Caco-2 (cell line): ENCODE measurements at regions of chr1 and their contacts with region 1.

Region 1: DNA sequence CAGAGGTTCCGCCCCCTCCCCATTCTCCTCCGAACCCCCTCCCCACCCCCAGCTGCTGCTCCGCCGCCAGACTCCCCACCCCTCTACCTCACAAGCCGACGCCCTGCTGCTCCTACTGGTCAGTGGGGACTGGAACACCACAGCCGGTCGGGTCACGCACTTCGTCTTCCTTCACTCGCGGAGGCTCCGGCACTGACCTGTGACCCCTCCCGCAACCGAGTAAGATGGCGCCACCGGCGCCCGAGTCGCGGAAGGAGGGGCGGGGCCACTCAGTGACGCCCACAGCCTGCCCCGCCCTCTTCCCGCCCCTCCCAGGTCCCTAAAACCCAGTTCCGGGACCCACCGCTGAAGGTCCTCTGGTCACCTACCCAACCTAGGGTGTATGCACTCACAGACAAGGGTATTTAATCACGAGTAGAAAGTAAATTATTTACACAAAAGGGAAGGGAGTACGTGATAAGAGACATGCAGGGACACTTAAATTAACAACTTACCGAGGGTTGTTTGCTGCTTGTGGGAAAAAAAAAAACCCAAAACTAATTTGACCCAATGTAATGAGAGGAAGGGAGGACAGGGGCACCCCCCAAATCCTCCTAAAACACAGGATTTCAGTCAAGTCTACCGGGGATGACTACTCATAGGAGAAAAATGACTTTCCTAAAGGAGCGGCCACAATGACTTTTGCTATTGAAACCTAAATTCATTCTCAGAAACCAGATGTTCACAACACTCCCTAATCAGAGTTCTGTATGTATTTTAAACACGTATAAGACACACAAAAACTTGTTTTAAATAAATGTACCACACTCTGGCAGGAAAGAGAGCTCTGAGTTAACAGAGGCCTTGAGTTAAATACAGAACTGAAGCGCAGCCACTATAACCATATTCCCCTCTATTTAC is at the start of gene RIT1:
- DNase-seq: peak; percentile 92 to 93
- H3K4me3 ChIP-seq: peak within 1 kb of the TSS; percentile 57
- H3K4me3 Mint-ChIP-seq: peak within 1 kb of the TSS; percentile 89
- H3K27ac Mint-ChIP-seq: peak within 1 kb of the TSS; percentile 84
- H3K4me1 ChIP-seq: 0 out of 2 replicates have a peak, but pooled peaks cover 7% of the 10 kb centered on the region
- H3K4me1 Mint-ChIP-seq: peaks cover 15% of the 10 kb centered on the region
- H3K27me3 ChIP-seq: no peaks in the 10 kb centered on the region
- H3K27me3 Mint-ChIP-seq: no peaks in the 10 kb centered on the region
- CTCF ChIP-seq: peak in 1 of 2 experiments; percentile 17
- total RNA-seq, gene RIT1: 21.9 and 23.0 TPM in 2 replicates

Region 2: GRCh38 chr1:155636397-155637153 is 274.8 kb before region 1 on chr1:
- CTCF ChIA-PET with region 1: no interaction called
- POLR2A ChIA-PET with region 1: no interaction called
- intact Hi-C with region 1: no loop called
- DNase-seq: no peak
- H3K4me3 ChIP-seq: no peak overlapping the region
- H3K4me3 Mint-ChIP-seq: no peak overlapping the region
- H3K27ac Mint-ChIP-seq: no peak overlapping the region
- H3K4me1 ChIP-seq: peaks cover under 1% of the 10 kb centered on the region; the same call in 1 of the 2 replicates
- H3K4me1 Mint-ChIP-seq: no peaks in the 10 kb centered on the region
- H3K27me3 ChIP-seq: no peaks in the 10 kb centered on the region
- H3K27me3 Mint-ChIP-seq: no peaks in the 10 kb centered on the region
- CTCF ChIP-seq: no peak

Region 3: GRCh38 chr1:155859234-155859829 is 52.1 kb before region 1 on chr1 and contains the start of gene SYT11:
- CTCF ChIA-PET with region 1: no interaction called
- POLR2A ChIA-PET with region 1: no interaction called
- intact Hi-C with region 1: loop called (anchors 10 kb)
- DNase-seq: peak; percentile 94
- H3K4me3 ChIP-seq: peak within 1 kb of the TSS; percentile 48
- H3K4me3 Mint-ChIP-seq: peak within 1 kb of the TSS; percentile 77
- H3K27ac Mint-ChIP-seq: peak within 1 kb of the TSS; percentile 40
- H3K4me1 ChIP-seq: peaks cover 6% of the 10 kb centered on the region
- H3K4me1 Mint-ChIP-seq: peaks cover 6% of the 10 kb centered on the region
- H3K27me3 ChIP-seq: no peaks in the 10 kb centered on the region
- H3K27me3 Mint-ChIP-seq: peaks cover 5% of the 10 kb centered on the region
- CTCF ChIP-seq: no peak
- total RNA-seq, gene SYT11: 0.05 TPM in 1 of 2 replicates, not detected in the other

Region 4: DNA sequence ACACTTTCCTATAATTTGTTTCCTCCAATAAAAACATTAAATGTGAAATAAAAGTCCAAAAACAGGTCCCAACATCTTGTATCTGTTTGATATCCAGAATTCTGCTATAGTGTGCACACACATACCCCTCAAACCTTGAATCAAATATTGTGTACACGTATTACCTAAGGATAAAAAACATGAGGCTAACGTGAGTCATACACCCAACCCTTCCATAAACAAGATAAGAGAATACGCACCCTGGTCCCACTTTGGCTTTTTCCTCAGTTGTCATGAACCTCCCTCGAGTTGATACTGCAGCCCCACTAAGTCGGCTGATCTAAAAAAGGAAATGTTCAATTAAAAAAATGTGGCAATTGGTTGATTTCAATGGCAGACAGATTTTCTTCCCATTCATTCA is 17.7 kb after region 1 on chr1:
- CTCF ChIA-PET with region 1: no interaction called
- POLR2A ChIA-PET with region 1: no interaction called
- intact Hi-C with region 1: no loop called
- DNase-seq: no peak
- H3K4me3 ChIP-seq: no peak overlapping the region
- H3K4me3 Mint-ChIP-seq: no peak overlapping the region
- H3K27ac Mint-ChIP-seq: no peak overlapping the region
- H3K4me1 ChIP-seq: peaks cover 20% of the 10 kb centered on the region
- H3K4me1 Mint-ChIP-seq: peaks cover 16% of the 10 kb centered on the region
- H3K27me3 ChIP-seq: no peaks in the 10 kb centered on the region
- H3K27me3 Mint-ChIP-seq: no peaks in the 10 kb centered on the region
- CTCF ChIP-seq: no peak

Region 5: DNA sequence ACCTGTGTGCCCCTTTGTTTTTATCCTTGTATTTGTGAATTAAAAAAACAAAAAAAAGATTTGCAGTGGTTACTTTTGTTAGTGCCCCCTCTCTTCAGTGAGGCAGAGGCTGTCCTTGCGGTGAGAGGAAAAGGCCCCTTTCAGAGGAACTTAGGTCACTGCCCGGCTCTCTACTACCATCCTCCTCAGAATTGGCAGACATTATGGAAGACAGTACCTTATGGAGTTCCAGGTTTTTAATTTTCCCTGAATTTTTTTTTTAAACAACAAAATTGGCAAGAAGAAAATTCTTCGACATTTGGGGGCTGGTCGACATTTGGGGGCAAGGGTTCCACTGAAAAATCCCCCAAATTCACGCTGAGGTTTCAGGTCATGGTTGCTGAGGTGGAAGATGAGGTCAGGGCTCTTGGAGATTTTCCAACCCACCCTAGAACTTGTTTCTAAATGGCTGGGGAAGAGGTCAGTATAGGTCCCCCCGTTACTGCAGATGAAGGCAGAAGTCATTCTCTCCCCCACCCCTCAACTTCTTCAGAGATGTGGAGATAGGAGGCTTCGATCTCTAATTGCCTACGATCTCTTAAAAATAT is 35.3 kb after region 1 on chr1:
- CTCF ChIA-PET with region 1: no interaction called
- POLR2A ChIA-PET with region 1: no interaction called
- intact Hi-C with region 1: no loop called
- DNase-seq: no peak
- H3K4me3 ChIP-seq: no peak overlapping the region
- H3K4me3 Mint-ChIP-seq: no peak overlapping the region
- H3K27ac Mint-ChIP-seq: no peak overlapping the region
- H3K4me1 ChIP-seq: peaks cover 9% of the 10 kb centered on the region; the same call in 1 of the 2 replicates
- H3K4me1 Mint-ChIP-seq: peaks cover 11% of the 10 kb centered on the region
- H3K27me3 ChIP-seq: no peaks in the 10 kb centered on the region
- H3K27me3 Mint-ChIP-seq: no peaks in the 10 kb centered on the region
- CTCF ChIP-seq: no peak